Naive thymus-derived CD4-positive, alpha-beta T cell (primary cell): ENCODE measurements at regions of chr7 and their contacts with region 1.

Region 1: DNA sequence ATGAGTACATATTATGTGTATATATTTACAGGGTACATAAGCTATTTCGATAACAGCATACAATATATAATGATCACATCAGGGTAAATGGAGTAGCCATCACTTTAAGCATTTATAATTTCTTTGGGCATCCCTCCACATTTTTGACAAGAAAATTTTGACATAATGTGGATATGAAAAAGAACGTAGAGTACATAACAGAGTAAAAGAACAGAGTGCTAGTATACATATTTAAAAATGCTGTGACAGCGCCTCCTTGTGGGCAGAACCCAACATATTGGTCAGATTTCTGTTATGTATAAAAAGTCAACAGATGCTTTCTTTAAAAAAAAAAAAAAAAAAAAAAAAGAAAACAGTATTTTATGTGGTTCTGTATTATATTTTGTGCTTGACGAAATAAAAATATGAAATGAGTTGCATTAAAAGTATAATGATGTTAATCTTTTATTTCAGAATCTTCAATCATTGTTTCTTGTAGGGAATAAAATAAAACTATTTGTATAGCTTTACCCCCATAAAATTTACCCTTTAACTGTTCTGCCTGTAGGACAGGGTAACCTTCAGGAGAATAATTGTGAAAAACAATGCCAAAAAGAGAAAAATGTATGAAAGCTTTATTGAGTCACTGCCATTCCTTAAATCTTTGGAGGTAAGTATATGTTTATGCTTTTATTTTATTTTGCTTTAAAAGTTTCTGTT is 18.3 kb upstream of the HBP1 start:
- DNase-seq: peak; percentile 45 to 79 (median 72)
- ATAC-seq: peak; percentile 88
- H3K4me3 ChIP-seq: no peak overlapping the region
- H3K4me3 Mint-ChIP-seq: no peak overlapping the region
- H3K27ac ChIP-seq: no peak overlapping the region
- H3K27ac Mint-ChIP-seq: no peak overlapping the region
- H3K4me1 ChIP-seq: no peaks in the 10 kb centered on the region
- H3K4me1 Mint-ChIP-seq: peaks cover 0 to 12% (median 4%) of the 10 kb centered on the region in 7 donors
- H3K27me3 ChIP-seq: no peaks in the 10 kb centered on the region
- H3K27me3 Mint-ChIP-seq: peaks cover 0 to 7% (median 3%) of the 10 kb centered on the region in 5 donors

Region 2: GRCh38 chr7:106717955-106718871 is 432.3 kb before region 1 on chr7:
- CTCF ChIA-PET with region 1: no interaction called
- POLR2A ChIA-PET with region 1: no interaction called
- intact Hi-C with region 1: no loop called
- DNase-seq: peak in 1 of 9 donors; percentile 70
- ATAC-seq: peak; percentile 94
- H3K4me3 ChIP-seq: no peak overlapping the region
- H3K4me3 Mint-ChIP-seq: no peak overlapping the region
- H3K27ac ChIP-seq: no peak overlapping the region
- H3K27ac Mint-ChIP-seq: no peak overlapping the region
- H3K4me1 ChIP-seq: peaks cover 6 to 19% of the 10 kb centered on the region in 2 donors
- H3K4me1 Mint-ChIP-seq: peaks cover 0 to 6% (median 0%) of the 10 kb centered on the region in 7 donors
- H3K27me3 ChIP-seq: no peaks in the 10 kb centered on the region
- H3K27me3 Mint-ChIP-seq: no peaks in the 10 kb centered on the region

Region 3: GRCh38 chr7:106793015-106793975 is 357.2 kb before region 1 on chr7:
- CTCF ChIA-PET with region 1: interaction called, 95 read pairs
- POLR2A ChIA-PET with region 1: no interaction called
- intact Hi-C with region 1: loop called (anchors 1 kb)
- DNase-seq: peak in 6 of 9 donors; percentile 31 to 59 (median 51)
- ATAC-seq: peak; percentile 76
- H3K4me3 ChIP-seq: no peak overlapping the region
- H3K4me3 Mint-ChIP-seq: no peak overlapping the region
- H3K27ac ChIP-seq: no peak overlapping the region
- H3K27ac Mint-ChIP-seq: no peak overlapping the region
- H3K4me1 ChIP-seq: no peaks in the 10 kb centered on the region
- H3K4me1 Mint-ChIP-seq: peaks cover 0 to 4% (median 0%) of the 10 kb centered on the region in 7 donors
- H3K27me3 ChIP-seq: no peaks in the 10 kb centered on the region
- H3K27me3 Mint-ChIP-seq: no peaks in the 10 kb centered on the region

Region 4: GRCh38 chr7:107044347-107045194 is 106.0 kb before region 1 on chr7 and contains the start of gene PRKAR2B:
- CTCF ChIA-PET with region 1: no interaction called
- POLR2A ChIA-PET with region 1: no interaction called
- intact Hi-C with region 1: loop called (anchors 5 kb)
- DNase-seq: peak; percentile 69 to 81 (median 79)
- ATAC-seq: peak; percentile 96
- H3K4me3 ChIP-seq: peak within 1 kb of the TSS; percentile 53
- H3K4me3 Mint-ChIP-seq: peak within 1 kb of the TSS; percentile 78 to 96 (median 90)
- H3K27ac ChIP-seq: peak within 1 kb of the TSS; percentile 33
- H3K27ac Mint-ChIP-seq: peak within 1 kb of the TSS in 7 of 9 donors; percentile 48 to 89 (median 77)
- H3K4me1 ChIP-seq: peaks cover 4 to 10% of the 10 kb centered on the region in 2 donors
- H3K4me1 Mint-ChIP-seq: peaks cover 11 to 19% (median 15%) of the 10 kb centered on the region in 7 donors
- H3K27me3 ChIP-seq: peaks cover 4 to 8% of the 10 kb centered on the region in 2 donors
- H3K27me3 Mint-ChIP-seq: peaks cover 13 to 47% (median 29%) of the 10 kb centered on the region in 5 donors
- total RNA-seq, gene PRKAR2B: 0.43 to 5.0 (median 0.67) TPM

Region 5: GRCh38 chr7:107725151-107725740 is 574.7 kb after region 1 on chr7:
- CTCF ChIA-PET with region 1: interaction called, 6 read pairs
- POLR2A ChIA-PET with region 1: no interaction called
- intact Hi-C with region 1: loop called (anchors 1 kb)
- DNase-seq: peak in 7 of 9 donors; percentile 23 to 56 (median 46)
- ATAC-seq: no peak
- H3K4me3 ChIP-seq: no peak overlapping the region
- H3K4me3 Mint-ChIP-seq: no peak overlapping the region
- H3K27ac ChIP-seq: no peak overlapping the region
- H3K27ac Mint-ChIP-seq: no peak overlapping the region
- H3K4me1 ChIP-seq: no peaks in the 10 kb centered on the region
- H3K4me1 Mint-ChIP-seq: no peaks in the 10 kb centered on the region
- H3K27me3 ChIP-seq: peaks cover 0 to 3% of the 10 kb centered on the region in 2 donors
- H3K27me3 Mint-ChIP-seq: peaks cover 9 to 29% (median 17%) of the 10 kb centered on the region in 5 donors